ENCODE measurements at regions of chr14 and their contacts with region 1.

Region 1: GRCh38 chr14:69611201-69612011 is at the start of gene SUSD6:
- DNase-seq: peak; percentile 96
- H3K4me3 ChIP-seq: peak within 1 kb of the TSS; percentile 82 to 88 (median 86)
- H3K27ac ChIP-seq: peak within 1 kb of the TSS; percentile 97 to 100 (median 98)
- H3K4me1 ChIP-seq: peaks cover 0 to 50% (median 47%) of the 10 kb centered on the region in 4 donors
- H3K27me3 ChIP-seq: no peaks in the 10 kb centered on the region
- CTCF ChIP-seq: no peak
- EP300 ChIP-seq: no peak
- POLR2A ChIP-seq: peak; percentile 44 to 46
- total RNA-seq, gene SUSD6: 13.5 to 62.0 (median 18.6) TPM

Region 2: GRCh38 chr14:69580009-69580577 is 31.3 kb before region 1 on chr14:
- intact Hi-C with region 1: no loop called
- DNase-seq: no peak
- H3K4me3 ChIP-seq: no peak overlapping the region
- H3K27ac ChIP-seq: no peak overlapping the region
- H3K4me1 ChIP-seq: no peaks in the 10 kb centered on the region
- H3K27me3 ChIP-seq: peaks cover 0 to 24% (median 7%) of the 10 kb centered on the region in 3 donors
- CTCF ChIP-seq: no peak
- EP300 ChIP-seq: no peak
- POLR2A ChIP-seq: no peak

Region 3: DNA sequence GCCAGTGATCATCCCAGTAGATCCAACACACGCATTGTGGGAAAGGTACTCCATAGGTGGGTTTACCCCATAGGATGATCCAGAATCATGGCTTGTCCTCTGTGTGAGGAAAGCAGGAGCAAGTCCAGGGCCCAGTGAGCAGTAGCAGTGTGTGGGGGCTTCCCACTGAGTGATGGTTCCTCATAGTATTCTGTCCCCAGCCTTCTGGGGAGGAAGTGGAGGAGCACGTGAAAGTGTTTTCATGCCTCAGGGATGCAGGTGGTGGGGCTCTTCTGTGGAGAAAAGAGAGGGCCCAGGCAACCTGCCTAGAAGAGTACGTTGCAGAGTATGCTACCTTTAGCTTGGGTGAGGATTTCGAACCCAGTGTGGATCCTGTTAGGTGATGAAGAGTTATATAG is 56.5 kb after region 1 on chr14:
- intact Hi-C with region 1: loop called (anchors 5 kb)
- DNase-seq: no peak
- H3K4me3 ChIP-seq: no peak overlapping the region
- H3K27ac ChIP-seq: peak overlapping the region in 3 of 4 donors; percentile 35 to 76 (median 36)
- H3K4me1 ChIP-seq: peaks cover 0 to 96% (median 85%) of the 10 kb centered on the region in 4 donors
- H3K27me3 ChIP-seq: no peaks in the 10 kb centered on the region
- CTCF ChIP-seq: no peak
- EP300 ChIP-seq: no peak
- POLR2A ChIP-seq: no peak

Region 4: GRCh38 chr14:69715725-69716477 is 104.5 kb after region 1 on chr14:
- intact Hi-C with region 1: loop called (anchors 2 kb)
- DNase-seq: peak; percentile 92
- H3K4me3 ChIP-seq: no peak overlapping the region
- H3K27ac ChIP-seq: peak overlapping the region; percentile 68 to 77 (median 74)
- H3K4me1 ChIP-seq: peaks cover 0 to 62% (median 44%) of the 10 kb centered on the region in 4 donors
- H3K27me3 ChIP-seq: no peaks in the 10 kb centered on the region
- CTCF ChIP-seq: no peak
- EP300 ChIP-seq: peak in 2 of 4 donors; percentile 2 to 67
- POLR2A ChIP-seq: no peak

Region 5: DNA sequence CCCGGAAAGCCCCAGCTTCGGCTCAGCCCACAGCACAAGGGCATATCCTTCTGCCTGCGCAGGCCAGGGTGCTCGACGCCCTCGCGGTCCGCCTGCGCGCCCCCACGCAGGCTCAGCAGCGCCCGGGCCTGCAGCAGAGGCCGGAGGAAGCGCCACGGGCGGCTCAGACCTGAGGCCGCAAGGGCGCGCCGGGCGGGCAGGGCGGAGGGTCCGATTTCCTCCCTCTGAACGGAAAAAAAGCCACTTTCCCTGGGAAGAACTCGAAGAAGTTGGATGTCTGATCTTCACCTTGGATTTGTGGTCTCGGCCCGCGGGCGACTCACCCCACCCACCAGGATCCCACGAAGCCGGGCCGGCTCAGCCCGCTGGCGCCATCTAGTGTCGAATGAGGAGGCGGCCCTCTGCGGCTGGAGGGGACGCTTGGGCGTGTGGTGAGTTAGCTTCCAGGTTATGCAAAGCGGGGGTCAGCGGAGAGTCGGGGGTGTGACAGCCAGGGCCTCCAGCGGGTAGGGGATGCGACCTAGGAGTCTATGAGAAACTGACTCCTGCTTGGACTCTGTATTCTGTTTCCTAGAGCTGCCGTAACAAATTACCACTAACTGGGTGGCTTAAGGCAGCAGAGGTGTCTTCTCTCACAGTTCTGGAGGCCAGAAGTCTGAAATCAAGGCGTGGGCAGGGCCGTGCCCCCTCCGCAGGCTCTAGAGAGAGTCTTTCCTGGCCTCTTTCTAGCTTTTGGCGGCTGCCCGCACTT is 115.5 kb after region 1 on chr14:
- intact Hi-C with region 1: no loop called
- DNase-seq: peak; percentile 89
- H3K4me3 ChIP-seq: peak overlapping the region in 3 of 4 donors; percentile 35 to 49 (median 43)
- H3K27ac ChIP-seq: peak overlapping the region; percentile 23 to 66 (median 44)
- H3K4me1 ChIP-seq: peaks cover 0 to 11% (median 7%) of the 10 kb centered on the region in 4 donors
- H3K27me3 ChIP-seq: no peaks in the 10 kb centered on the region
- CTCF ChIP-seq: peak; percentile 96 to 98 (median 98)
- EP300 ChIP-seq: no peak
- POLR2A ChIP-seq: no peak

Region 6: DNA sequence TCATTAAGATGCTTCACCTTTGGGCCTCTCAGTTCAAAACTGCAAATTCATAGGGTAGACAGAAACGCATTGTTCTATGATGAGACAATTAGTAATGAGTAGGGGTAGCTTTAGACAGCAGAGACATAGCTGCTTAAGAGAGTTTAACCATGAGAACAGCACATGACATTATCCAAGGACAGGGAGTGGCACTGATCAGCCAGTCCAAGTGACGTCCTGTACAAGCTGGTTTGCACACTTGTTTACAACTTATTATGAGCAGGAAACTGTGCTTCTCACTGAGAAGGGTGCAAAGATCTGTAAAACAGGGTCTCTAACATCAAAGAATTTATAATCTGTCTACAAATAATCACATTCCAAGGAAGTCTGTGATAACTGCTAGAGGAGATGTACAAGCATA is 144.4 kb after region 1 on chr14:
- intact Hi-C with region 1: no loop called
- DNase-seq: no peak
- H3K4me3 ChIP-seq: no peak overlapping the region
- H3K27ac ChIP-seq: no peak overlapping the region
- H3K4me1 ChIP-seq: no peaks in the 10 kb centered on the region
- H3K27me3 ChIP-seq: no peaks in the 10 kb centered on the region
- CTCF ChIP-seq: no peak
- EP300 ChIP-seq: no peak
- POLR2A ChIP-seq: no peak

Region 7: GRCh38 chr14:69766984-69767368 is 155.6 kb after region 1 on chr14 and contains the start of gene SRSF5:
- intact Hi-C with region 1: loop called (anchors 2 kb)
- DNase-seq: peak; percentile 99
- H3K4me3 ChIP-seq: peak within 1 kb of the TSS; percentile 72 to 99 (median 91)
- H3K27ac ChIP-seq: peak within 1 kb of the TSS; percentile 98 to 100 (median 100)
- H3K4me1 ChIP-seq: peaks cover 0 to 45% (median 41%) of the 10 kb centered on the region in 4 donors
- H3K27me3 ChIP-seq: no peaks in the 10 kb centered on the region
- CTCF ChIP-seq: no peak
- EP300 ChIP-seq: peak in 1 of 4 donors; percentile 14
- POLR2A ChIP-seq: peak; percentile 97 to 99
- total RNA-seq, gene SRSF5: 263 to 366 (median 303) TPM

Measured in sigmoid colon (tissue), 7 donors.